Endothelial cell of umbilical vein (primary cell): ENCODE measurements at regions of chr11 and their contacts with region 1.

Region 1: GRCh38 chr11:124225471-124225870 is 15.4 kb upstream of the OR8G1 start:
- DNase-seq: no peak
- H3K4me3 ChIP-seq: no peak overlapping the region
- H3K27ac ChIP-seq: no peak overlapping the region
- H3K4me1 ChIP-seq: no peaks in the 10 kb centered on the region
- H3K27me3 ChIP-seq: no peaks in the 10 kb centered on the region
- CTCF ChIP-seq: no peak
- POLR2A ChIP-seq: no peak

Region 2: DNA sequence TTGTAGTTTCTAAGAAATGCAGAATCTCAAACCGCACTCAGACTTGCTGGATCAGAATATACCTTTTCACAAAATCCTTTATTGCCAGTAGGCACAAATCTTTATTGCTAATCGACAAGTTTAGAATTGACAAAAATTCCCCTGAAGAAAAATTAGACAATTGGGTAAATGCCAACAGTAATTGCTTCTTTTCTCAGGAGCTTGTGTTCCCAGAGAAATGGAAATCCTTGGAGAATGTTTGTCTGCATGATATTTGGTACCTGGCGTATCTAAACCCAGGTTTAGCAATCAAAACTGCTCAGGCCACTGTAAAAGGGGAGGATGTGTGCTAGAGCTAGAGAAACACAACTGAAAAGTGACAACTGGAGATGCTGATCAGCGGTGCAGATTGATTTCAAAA is 30.6 kb after region 1 on chr11 and contains the start of gene OR8G5:
- CTCF ChIA-PET with region 1: interaction called, 3 read pairs
- POLR2A ChIA-PET with region 1: no interaction called
- dilution Hi-C with region 1: no loop called
- intact Hi-C with region 1: loop called (anchors 2 kb)
- DNase-seq: no peak
- H3K4me3 ChIP-seq: no peak within 1 kb of the TSS
- H3K27ac ChIP-seq: no peak within 1 kb of the TSS
- H3K4me1 ChIP-seq: no peaks in the 10 kb centered on the region
- H3K27me3 ChIP-seq: peaks cover 2% of the 10 kb centered on the region in 2 experiments
- CTCF ChIP-seq: no peak
- POLR2A ChIP-seq: no peak
- total RNA-seq, gene OR8G5: not detected in 2 replicates